HAP-1 (cell line): ENCODE measurements at regions of chr5 and their contacts with region 1.

Region 1: DNA sequence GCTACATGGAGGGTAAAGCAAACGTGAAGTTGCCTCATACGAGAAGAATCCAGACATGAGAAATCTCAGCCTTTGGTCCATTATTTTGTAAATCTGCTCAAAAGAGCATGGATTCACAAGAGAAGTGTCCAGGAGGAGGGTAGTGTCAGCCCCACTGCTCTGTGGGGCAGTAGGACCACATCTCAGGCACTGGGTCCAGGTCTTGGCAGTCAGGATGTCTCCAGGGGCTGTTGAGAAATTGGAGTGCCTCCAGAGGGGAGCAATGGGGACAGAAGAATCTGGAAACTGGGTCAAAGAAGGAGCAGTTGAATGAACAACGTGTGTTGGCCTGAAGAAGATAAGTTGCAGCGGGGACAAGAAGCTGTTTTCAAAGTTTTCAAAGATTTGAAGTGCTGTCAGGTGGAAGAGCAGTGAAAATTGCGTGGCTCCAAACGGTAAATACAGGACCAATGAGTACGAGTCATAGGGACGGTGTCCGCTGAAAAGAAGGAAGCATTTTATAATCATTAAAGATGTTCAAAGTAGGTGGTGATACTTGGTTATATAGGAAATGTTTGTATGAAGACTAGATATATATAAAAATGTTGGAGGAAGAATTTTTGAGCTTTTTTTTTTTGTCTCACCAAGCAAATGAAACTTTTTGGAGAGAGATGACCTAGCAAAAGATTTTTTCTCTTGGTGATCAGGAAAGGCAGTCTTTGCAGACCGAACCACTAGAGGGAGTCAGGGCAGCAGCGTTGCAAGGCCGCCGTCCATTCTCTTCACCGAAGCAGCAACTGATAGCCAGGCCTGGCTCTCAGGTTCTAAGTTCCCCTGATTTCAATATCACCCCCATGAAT is 57.1 kb upstream of the ZBED3 start:
- DNase-seq: peak; percentile 63 to 76
- H3K4me3 ChIP-seq: no peak overlapping the region
- H3K4me1 ChIP-seq: no peaks in the 10 kb centered on the region
- H3K27me3 ChIP-seq: no peaks in the 10 kb centered on the region

Region 2: GRCh38 chr5:76527685-76528161 is 616.5 kb before region 1 on chr5:
- in situ Hi-C with region 1: no loop called
- DNase-seq: peak in 1 of 2 experiments; percentile 26
- H3K4me3 ChIP-seq: no peak overlapping the region
- H3K4me1 ChIP-seq: peaks cover 14% of the 10 kb centered on the region
- H3K27me3 ChIP-seq: no peaks in the 10 kb centered on the region

Region 3: GRCh38 chr5:77012601-77013000 is 131.6 kb before region 1 on chr5:
- in situ Hi-C with region 1: no loop called
- DNase-seq: no peak
- H3K4me3 ChIP-seq: no peak overlapping the region
- H3K4me1 ChIP-seq: no peaks in the 10 kb centered on the region
- H3K27me3 ChIP-seq: peaks cover 8% of the 10 kb centered on the region

Region 4: GRCh38 chr5:77491783-77492652 is 347.8 kb after region 1 on chr5 and contains the start of gene WDR41:
- in situ Hi-C with region 1: loop called (anchors 25 kb)
- DNase-seq: peak; percentile 84 to 92
- H3K4me3 ChIP-seq: peak within 1 kb of the TSS; percentile 76
- H3K4me1 ChIP-seq: peaks cover 3% of the 10 kb centered on the region; the same call in 1 of the 2 replicates
- H3K27me3 ChIP-seq: peaks cover 12% of the 10 kb centered on the region